Dendritic cell treated with granulocyte-macrophage colony-stimulating factor and Interleukin-4, amounts not matched to agents 40 ng/mL and 50 ng/mL, for 4 days (primary cell): ENCODE measurements at regions of chr7 and their contacts with region 1.

Region 1: GRCh38 chr7:17123020-17123419 is 175.4 kb upstream of the AHR start:
- H3K4me3 Mint-ChIP-seq: no peak overlapping the region
- H3K27ac Mint-ChIP-seq: peak overlapping the region; percentile 76
- H3K4me1 Mint-ChIP-seq: peaks cover 49% of the 10 kb centered on the region
- H3K27me3 Mint-ChIP-seq: no peaks in the 10 kb centered on the region

Region 2: GRCh38 chr7:16961641-16962040 is 161.4 kb before region 1 on chr7:
- intact Hi-C with region 1: no loop called
- H3K4me3 Mint-ChIP-seq: no peak overlapping the region
- H3K27ac Mint-ChIP-seq: no peak overlapping the region
- H3K4me1 Mint-ChIP-seq: no peaks in the 10 kb centered on the region
- H3K27me3 Mint-ChIP-seq: no peaks in the 10 kb centered on the region

Region 3: DNA sequence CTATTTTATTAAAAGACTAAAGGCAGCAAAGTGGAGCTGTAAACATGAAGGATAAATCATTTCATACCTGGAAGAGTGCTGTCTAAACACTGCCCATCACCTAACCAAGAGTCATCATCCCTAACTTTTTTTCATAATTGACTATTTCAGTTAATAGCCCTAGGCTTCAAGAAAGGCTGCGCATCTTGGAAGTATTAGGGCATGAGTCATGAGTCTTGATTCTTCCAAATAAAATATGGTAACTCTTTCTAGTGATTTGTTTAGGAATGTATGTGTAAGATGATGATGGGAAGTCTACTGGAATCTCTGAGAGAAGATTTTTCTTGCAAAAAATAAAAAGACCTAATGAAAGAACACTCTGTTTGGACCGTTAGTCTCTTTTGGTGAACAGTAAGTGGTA is 32.3 kb before region 1 on chr7:
- intact Hi-C with region 1: loop called (anchors 5 kb)
- H3K4me3 Mint-ChIP-seq: no peak overlapping the region
- H3K27ac Mint-ChIP-seq: no peak overlapping the region
- H3K4me1 Mint-ChIP-seq: peaks cover 22% of the 10 kb centered on the region
- H3K27me3 Mint-ChIP-seq: no peaks in the 10 kb centered on the region

Region 4: DNA sequence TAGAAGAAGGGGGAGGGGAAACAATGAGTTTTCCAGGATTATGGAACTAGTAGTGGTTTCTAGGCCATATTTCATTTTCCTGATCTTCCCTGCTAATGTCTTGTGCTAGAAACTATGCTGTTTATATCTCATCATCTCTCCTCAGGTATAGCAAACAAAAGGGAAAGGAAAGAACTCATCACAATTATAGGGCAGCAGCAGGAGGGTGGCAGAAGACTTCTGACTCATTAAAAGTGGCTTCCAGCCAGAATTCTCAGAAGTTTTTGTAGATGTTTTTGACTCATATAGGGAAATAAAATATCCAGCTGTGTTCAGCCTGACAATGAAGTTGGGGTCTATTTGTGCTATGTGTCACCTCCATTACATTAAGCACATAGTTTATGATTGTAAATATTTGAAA is 181.9 kb after region 1 on chr7:
- intact Hi-C with region 1: no loop called
- H3K4me3 Mint-ChIP-seq: peak overlapping the region; percentile 67
- H3K27ac Mint-ChIP-seq: peak overlapping the region; percentile 84
- H3K4me1 Mint-ChIP-seq: peaks cover 6% of the 10 kb centered on the region
- H3K27me3 Mint-ChIP-seq: no peaks in the 10 kb centered on the region